ENCODE measurements at regions of chr17 and their contacts with region 1.

Region 1: DNA sequence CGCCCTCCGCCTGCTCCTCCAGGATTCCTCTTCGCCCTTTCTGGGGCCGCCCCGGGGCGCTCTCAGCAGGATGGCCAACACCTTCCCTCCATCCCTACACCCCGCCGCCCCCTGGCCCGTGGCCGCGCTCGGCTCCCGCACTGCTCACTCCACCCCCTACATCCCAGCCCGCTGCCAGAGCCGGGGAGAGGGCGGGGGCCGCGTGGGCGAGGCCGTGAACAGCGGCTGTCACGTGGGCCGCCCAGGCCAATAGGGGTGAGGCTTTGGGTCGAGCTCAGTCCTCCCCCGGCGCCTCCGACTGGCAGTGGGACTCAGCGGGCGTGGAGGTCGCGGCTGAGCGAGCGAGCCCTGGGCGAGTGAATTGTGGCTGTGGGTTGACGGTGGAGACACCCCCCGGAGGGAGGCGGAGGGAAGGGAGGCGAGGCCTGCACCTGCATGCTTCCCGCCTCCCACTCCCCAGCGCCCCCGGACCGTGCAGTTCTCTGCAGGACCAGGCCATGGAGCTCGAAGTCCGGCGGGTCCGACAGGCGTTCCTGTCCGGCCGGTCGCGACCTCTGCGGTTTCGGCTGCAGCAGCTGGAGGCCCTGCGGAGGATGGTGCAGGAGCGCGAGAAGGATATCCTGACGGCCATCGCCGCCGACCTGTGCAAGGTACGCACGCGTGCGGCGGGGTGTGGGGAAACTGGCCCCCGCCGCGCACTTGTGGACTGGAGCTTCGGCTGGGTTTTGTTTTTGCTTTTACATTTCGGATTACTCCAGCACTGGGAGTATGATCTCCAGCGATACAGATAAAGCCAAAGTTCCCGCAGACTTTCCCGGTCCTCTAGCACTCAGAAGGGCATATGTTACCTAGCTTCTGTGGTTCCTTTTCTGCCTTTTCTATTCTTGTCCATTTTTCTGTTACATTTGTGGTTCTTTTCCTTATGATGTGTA is at the start of gene ALDH3A2:
- DNase-seq: peak; percentile 97
- H3K4me3 ChIP-seq: peak within 1 kb of the TSS; percentile 49 to 88 (median 79)
- H3K27ac ChIP-seq: peak within 1 kb of the TSS; percentile 90 to 98 (median 96)
- H3K4me1 ChIP-seq: peaks cover 14 to 62% (median 48%) of the 10 kb centered on the region in 4 donors
- H3K27me3 ChIP-seq: no peaks in the 10 kb centered on the region
- CTCF ChIP-seq: peak in 1 of 5 experiments; percentile 42
- EP300 ChIP-seq: no peak
- POLR2A ChIP-seq: peak; percentile 91
- total RNA-seq, gene ALDH3A2: 44.5 to 199 (median 119) TPM

Region 2: GRCh38 chr17:19362277-19363113 is 286.2 kb before region 1 on chr17 and contains the start of gene B9D1:
- in situ Hi-C with region 1: loop called in 1 of 4 experiments (anchors 25 kb)
- intact Hi-C with region 1: no loop called
- DNase-seq: peak; percentile 96
- H3K4me3 ChIP-seq: peak within 1 kb of the TSS; percentile 61 to 78 (median 69)
- H3K27ac ChIP-seq: peak within 1 kb of the TSS; percentile 71 to 88 (median 85)
- H3K4me1 ChIP-seq: peaks cover 8 to 14% (median 12%) of the 10 kb centered on the region in 4 donors
- H3K27me3 ChIP-seq: no peaks in the 10 kb centered on the region
- CTCF ChIP-seq: peak; percentile 95 to 100 (median 98)
- EP300 ChIP-seq: no peak
- POLR2A ChIP-seq: no peak
- total RNA-seq, gene B9D1: 6.0 to 17.6 (median 9.5) TPM

Region 3: GRCh38 chr17:19507775-19508576 is 140.8 kb before region 1 on chr17:
- in situ Hi-C with region 1: loop called in 2 of 4 experiments (anchors 10 to 25 kb)
- intact Hi-C with region 1: loop called (anchors 10 kb)
- DNase-seq: peak; percentile 91
- H3K4me3 ChIP-seq: peak overlapping the region; percentile 61 to 83 (median 65)
- H3K27ac ChIP-seq: peak overlapping the region; percentile 88 to 96 (median 92)
- H3K4me1 ChIP-seq: peaks cover 0 to 8% (median 5%) of the 10 kb centered on the region in 4 donors
- H3K27me3 ChIP-seq: no peaks in the 10 kb centered on the region
- CTCF ChIP-seq: no peak
- EP300 ChIP-seq: no peak
- POLR2A ChIP-seq: peak; percentile 49

Region 4: DNA sequence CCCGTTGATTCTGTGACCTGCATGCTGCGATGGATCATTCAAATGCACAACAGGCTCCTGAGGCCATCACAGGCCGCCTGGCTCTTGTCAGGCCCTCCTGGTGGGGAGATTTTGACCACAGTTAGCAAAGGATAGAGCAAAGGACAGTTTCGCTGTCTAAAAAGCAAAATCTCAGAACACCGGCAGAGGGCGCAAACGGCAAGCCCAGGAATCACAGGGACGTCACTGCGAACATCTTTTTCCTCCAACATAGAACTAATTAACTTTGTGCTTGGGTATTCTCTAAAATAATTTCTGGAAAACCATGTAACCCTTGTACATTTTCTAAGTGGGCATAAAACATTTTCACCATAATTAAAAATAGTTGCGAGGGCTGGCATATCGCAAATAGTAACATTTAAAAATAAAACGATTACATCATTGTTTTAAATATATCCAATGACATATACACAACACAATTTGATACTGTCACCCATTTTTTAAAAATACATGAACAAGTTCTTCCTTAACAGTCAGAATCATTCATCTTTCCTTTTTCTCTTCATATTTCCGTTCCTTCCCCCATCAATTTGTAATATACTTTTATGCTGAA is 134.7 kb before region 1 on chr17:
- in situ Hi-C with region 1: loop called in 3 of 4 experiments (anchors 5 to 25 kb)
- intact Hi-C with region 1: loop called (anchors 10 kb)
- DNase-seq: peak; percentile 75
- H3K4me3 ChIP-seq: no peak overlapping the region
- H3K27ac ChIP-seq: peak overlapping the region in 2 of 4 donors; percentile 8 to 11
- H3K4me1 ChIP-seq: no peaks in the 10 kb centered on the region
- H3K27me3 ChIP-seq: no peaks in the 10 kb centered on the region
- CTCF ChIP-seq: peak; percentile 83 to 93 (median 89)
- EP300 ChIP-seq: no peak
- POLR2A ChIP-seq: no peak

Region 5: GRCh38 chr17:19728079-19728495 is 79.3 kb after region 1 on chr17:
- in situ Hi-C with region 1: no loop called
- intact Hi-C with region 1: loop called (anchors 5 kb)
- DNase-seq: peak; percentile 80
- H3K4me3 ChIP-seq: no peak overlapping the region
- H3K27ac ChIP-seq: peak overlapping the region; percentile 84 to 95 (median 87)
- H3K4me1 ChIP-seq: peaks cover 25 to 50% (median 36%) of the 10 kb centered on the region in 4 donors
- H3K27me3 ChIP-seq: no peaks in the 10 kb centered on the region
- CTCF ChIP-seq: no peak
- EP300 ChIP-seq: no peak
- POLR2A ChIP-seq: no peak

Region 6: GRCh38 chr17:19744922-19745757 is 96.4 kb after region 1 on chr17:
- in situ Hi-C with region 1: loop called in 2 of 4 experiments (anchors 25 kb)
- intact Hi-C with region 1: loop called (anchors 5 kb)
- DNase-seq: peak; percentile 96
- H3K4me3 ChIP-seq: peak overlapping the region; percentile 33 to 61 (median 44)
- H3K27ac ChIP-seq: peak overlapping the region; percentile 72 to 88 (median 76)
- H3K4me1 ChIP-seq: peaks cover 5 to 33% (median 25%) of the 10 kb centered on the region in 4 donors
- H3K27me3 ChIP-seq: no peaks in the 10 kb centered on the region
- CTCF ChIP-seq: peak; percentile 88 to 98 (median 95)
- EP300 ChIP-seq: no peak
- POLR2A ChIP-seq: peak; percentile 10